T-cell (primary cell): ENCODE measurements at regions of chr13 and their contacts with region 1.

Region 1: GRCh38 chr13:59318320-59318930 is 845.3 kb downstream of the DIAPH3 start:
- DNase-seq: peak in 30 of 35 experiments; percentile 0 to 47 (median 20)
- ATAC-seq: no peak
- H3K4me3 ChIP-seq: no peak overlapping the region
- H3K4me3 Mint-ChIP-seq: no peak overlapping the region
- H3K27ac ChIP-seq: no peak overlapping the region
- H3K27ac Mint-ChIP-seq: no peak overlapping the region
- H3K4me1 ChIP-seq: no peaks in the 10 kb centered on the region
- H3K4me1 Mint-ChIP-seq: no peaks in the 10 kb centered on the region
- H3K27me3 ChIP-seq: no peaks in the 10 kb centered on the region
- H3K27me3 Mint-ChIP-seq: peaks cover 4% of the 10 kb centered on the region in 2 donors

Region 2: GRCh38 chr13:59043016-59043415 is 275.4 kb before region 1 on chr13:
- CTCF ChIA-PET with region 1: interaction called in 1 of 2 experiments, 14 read pairs
- POLR2A ChIA-PET with region 1: no interaction called
- DNase-seq: no peak
- ATAC-seq: no peak
- H3K4me3 ChIP-seq: no peak overlapping the region
- H3K4me3 Mint-ChIP-seq: no peak overlapping the region
- H3K27ac ChIP-seq: no peak overlapping the region
- H3K27ac Mint-ChIP-seq: no peak overlapping the region
- H3K4me1 ChIP-seq: no peaks in the 10 kb centered on the region
- H3K4me1 Mint-ChIP-seq: no peaks in the 10 kb centered on the region
- H3K27me3 ChIP-seq: no peaks in the 10 kb centered on the region
- H3K27me3 Mint-ChIP-seq: no peaks in the 10 kb centered on the region

Region 3: GRCh38 chr13:59201841-59202240 is 116.6 kb before region 1 on chr13:
- CTCF ChIA-PET with region 1: no interaction called
- POLR2A ChIA-PET with region 1: no interaction called
- DNase-seq: no peak
- ATAC-seq: no peak
- H3K4me3 ChIP-seq: no peak overlapping the region
- H3K4me3 Mint-ChIP-seq: no peak overlapping the region
- H3K27ac ChIP-seq: no peak overlapping the region
- H3K27ac Mint-ChIP-seq: no peak overlapping the region
- H3K4me1 ChIP-seq: no peaks in the 10 kb centered on the region
- H3K4me1 Mint-ChIP-seq: no peaks in the 10 kb centered on the region
- H3K27me3 ChIP-seq: no peaks in the 10 kb centered on the region
- H3K27me3 Mint-ChIP-seq: peaks cover 0 to 8% of the 10 kb centered on the region in 2 donors

Region 4: DNA sequence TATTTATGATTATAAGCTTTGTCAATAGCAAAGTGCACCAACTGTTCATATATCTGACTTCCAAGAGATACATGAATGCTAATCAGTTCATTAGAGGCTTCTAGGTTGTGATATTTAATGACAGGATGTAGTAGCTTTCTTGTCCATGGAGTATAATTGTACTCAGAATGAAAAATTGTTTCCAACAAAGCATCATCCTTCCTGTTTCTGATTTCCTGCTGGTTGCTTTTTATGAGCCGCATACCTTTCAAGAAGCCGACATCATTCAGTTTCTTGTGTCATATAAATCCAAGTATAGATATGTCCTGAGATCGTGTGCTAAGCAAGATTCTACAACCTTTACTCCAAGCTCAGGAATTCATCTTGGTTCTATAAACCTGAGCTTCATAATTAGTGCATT is 518.7 kb after region 1 on chr13:
- CTCF ChIA-PET with region 1: interaction called in 1 of 2 experiments, 10 read pairs
- POLR2A ChIA-PET with region 1: no interaction called
- DNase-seq: no peak
- ATAC-seq: no peak
- H3K4me3 ChIP-seq: no peak overlapping the region
- H3K4me3 Mint-ChIP-seq: no peak overlapping the region
- H3K27ac ChIP-seq: no peak overlapping the region
- H3K27ac Mint-ChIP-seq: no peak overlapping the region
- H3K4me1 ChIP-seq: no peaks in the 10 kb centered on the region
- H3K4me1 Mint-ChIP-seq: no peaks in the 10 kb centered on the region
- H3K27me3 ChIP-seq: no peaks in the 10 kb centered on the region
- H3K27me3 Mint-ChIP-seq: no peaks in the 10 kb centered on the region